Brain microvascular endothelial cell (primary cell): ENCODE measurements at regions of chr16 and their contacts with region 1.

Region 1: DNA sequence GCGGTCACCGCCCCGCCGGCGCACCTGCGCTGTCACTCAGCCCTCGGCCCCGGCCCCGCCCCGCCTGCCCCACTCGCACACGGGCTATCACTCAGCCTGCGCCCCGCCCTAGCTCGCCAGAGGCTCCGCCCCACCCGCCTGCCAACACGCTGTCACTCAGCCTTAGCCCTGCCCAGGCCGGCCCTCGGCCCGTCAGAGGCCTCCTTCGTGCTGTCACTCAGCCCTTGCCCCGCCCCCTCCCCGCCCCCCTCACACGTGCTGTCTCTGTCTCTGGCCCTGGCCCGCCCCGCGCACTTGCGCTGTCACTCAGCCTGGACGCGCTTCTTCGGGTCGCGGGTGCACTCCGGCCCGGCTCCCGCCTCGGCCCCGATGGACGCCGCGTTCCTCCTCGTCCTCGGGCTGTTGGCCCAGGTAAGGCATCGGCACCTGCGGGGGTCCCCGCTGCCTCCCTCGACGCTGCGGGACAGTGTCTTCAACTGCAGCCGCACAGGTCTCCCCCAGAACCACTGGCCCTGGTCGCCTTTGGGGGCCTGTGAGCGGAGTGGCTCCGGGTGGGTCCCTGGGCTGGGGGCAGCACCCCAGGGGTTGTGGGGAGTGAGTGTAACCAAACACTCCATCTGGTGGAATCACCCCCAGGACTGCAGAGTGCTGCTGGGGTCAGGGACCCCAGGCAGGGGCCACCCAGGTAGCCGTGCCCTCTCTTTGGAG is at the start of gene CDH15:
- DNase-seq: peak; percentile 82
- H3K4me3 ChIP-seq: no peak within 1 kb of the TSS
- H3K27ac ChIP-seq: no peak within 1 kb of the TSS
- H3K27me3 ChIP-seq: peaks cover 11% of the 10 kb centered on the region
- CTCF ChIP-seq: no peak

Region 2: GRCh38 chr16:88770461-88771293 is 400.9 kb before region 1 on chr16:
- in situ Hi-C with region 1: loop called (anchors 25 kb)
- DNase-seq: peak; percentile 80
- H3K4me3 ChIP-seq: peak overlapping the region; percentile 22
- H3K27ac ChIP-seq: peak overlapping the region; percentile 46
- H3K27me3 ChIP-seq: no peaks in the 10 kb centered on the region
- CTCF ChIP-seq: no peak